Dendritic cell treated with granulocyte-macrophage colony-stimulating factor and Interleukin-4, amounts not matched to agents 40 ng/mL and 50 ng/mL, for 4 days (primary cell): ENCODE measurements at regions of chr1 and their contacts with region 1.

Region 1: GRCh38 chr1:241847796-241848685 is at the start of gene EXO1:
- H3K4me3 Mint-ChIP-seq: peak within 1 kb of the TSS; percentile 92
- H3K27ac Mint-ChIP-seq: peak within 1 kb of the TSS; percentile 99
- H3K4me1 Mint-ChIP-seq: peaks cover 14% of the 10 kb centered on the region
- H3K27me3 Mint-ChIP-seq: no peaks in the 10 kb centered on the region

Region 2: DNA sequence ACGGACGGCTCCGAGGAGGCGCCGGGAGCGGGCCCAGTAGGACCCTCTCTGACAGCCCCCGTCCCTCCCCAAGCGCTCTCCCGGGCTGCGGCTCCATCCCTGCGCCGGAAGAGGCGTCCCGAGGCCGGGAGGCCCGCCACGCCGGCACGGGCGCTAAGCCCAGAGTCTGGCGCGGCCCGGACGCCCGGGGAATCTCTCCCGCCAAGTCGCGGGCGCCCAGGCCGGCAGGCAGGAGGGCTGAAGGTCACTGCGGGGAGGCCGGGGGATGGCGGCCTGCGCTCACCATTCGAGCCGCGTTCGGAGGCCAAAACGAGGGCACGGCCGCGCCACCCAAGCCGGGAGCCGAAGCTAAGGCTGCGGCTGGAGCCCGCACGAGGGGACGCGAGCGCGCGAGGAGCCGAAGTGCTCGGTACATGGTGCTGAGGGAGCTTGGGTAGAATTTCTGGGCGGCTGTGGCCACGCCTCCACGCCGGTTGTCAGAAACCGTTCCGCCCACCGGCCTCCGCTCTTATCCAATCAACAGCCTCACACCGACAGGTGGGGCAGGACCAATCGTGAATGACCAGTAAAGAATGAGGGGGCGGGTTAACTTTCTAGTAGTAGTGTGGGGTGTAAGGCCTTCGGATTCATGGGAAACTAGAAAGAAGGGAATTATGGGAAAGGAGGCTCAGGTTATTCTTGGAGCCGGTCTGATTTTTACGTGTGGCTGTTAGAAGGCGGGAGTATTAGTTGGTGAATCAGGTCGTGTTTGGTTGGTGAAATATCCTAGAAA is 328.5 kb before region 1 on chr1 and contains the start of gene FH:
- intact Hi-C with region 1: loop called (anchors 5 kb)
- H3K4me3 Mint-ChIP-seq: no peak within 1 kb of the TSS
- H3K27ac Mint-ChIP-seq: no peak within 1 kb of the TSS
- H3K4me1 Mint-ChIP-seq: peaks cover 10% of the 10 kb centered on the region
- H3K27me3 Mint-ChIP-seq: peaks cover 16% of the 10 kb centered on the region

Region 3: GRCh38 chr1:241640029-241640818 is 207.8 kb before region 1 on chr1 and contains the starts of genes CHML and OPN3:
- intact Hi-C with region 1: loop called (anchors 1 kb)
- H3K4me3 Mint-ChIP-seq: peak within 1 kb of the TSS; percentile 93
- H3K27ac Mint-ChIP-seq: peak within 1 kb of the TSS; percentile 92
- H3K4me1 Mint-ChIP-seq: peaks cover 34% of the 10 kb centered on the region
- H3K27me3 Mint-ChIP-seq: no peaks in the 10 kb centered on the region